GM12878 (cell line): ENCODE measurements at regions of chr2 and their contacts with region 1.

Region 1: DNA sequence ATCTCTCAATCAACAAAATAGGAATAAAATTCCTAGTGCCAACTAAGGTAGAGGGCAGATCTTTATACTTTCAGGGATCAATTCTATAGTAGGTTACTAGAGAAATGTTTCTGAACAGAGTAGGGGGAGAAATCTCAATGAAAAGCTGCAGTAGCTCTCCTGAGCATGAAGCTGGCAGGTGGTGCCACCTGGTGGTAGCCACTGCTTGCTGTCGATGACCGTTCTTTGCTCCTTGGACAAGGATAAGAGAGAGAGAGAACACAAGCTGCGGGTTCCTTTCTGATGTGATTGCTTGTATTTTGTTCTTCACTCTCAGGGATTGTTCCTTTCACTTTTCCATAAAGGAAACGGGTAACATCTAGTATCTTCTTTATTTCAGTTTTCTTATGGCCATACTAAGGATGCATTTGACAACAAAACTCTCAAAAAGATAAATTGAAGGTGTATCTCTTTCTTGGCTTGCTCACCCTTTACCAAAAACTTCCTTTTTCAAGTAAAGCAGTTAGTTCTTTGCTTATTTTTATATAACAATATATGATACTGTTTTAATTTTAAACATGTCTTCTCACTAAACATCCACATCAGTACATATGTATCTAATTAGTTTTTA is 18.6 kb upstream of the MRPL19 start:
- DNase-seq: no peak
- ATAC-seq: peak; percentile 96
- H3K4me3 ChIP-seq: no peak overlapping the region
- H3K27ac ChIP-seq: no peak overlapping the region
- H3K4me1 ChIP-seq: no peaks in the 10 kb centered on the region
- H3K27me3 ChIP-seq: peaks cover 0 to 2% of the 10 kb centered on the region in 2 experiments; a peak in 1 of 4 replicates
- CTCF ChIP-seq: peak; percentile 86 to 97 (median 91)
- EP300 ChIP-seq: no peak
- POLR2A ChIP-seq: no peak
- RAD21 ChIP-seq: peak; percentile 80

Region 2: DNA sequence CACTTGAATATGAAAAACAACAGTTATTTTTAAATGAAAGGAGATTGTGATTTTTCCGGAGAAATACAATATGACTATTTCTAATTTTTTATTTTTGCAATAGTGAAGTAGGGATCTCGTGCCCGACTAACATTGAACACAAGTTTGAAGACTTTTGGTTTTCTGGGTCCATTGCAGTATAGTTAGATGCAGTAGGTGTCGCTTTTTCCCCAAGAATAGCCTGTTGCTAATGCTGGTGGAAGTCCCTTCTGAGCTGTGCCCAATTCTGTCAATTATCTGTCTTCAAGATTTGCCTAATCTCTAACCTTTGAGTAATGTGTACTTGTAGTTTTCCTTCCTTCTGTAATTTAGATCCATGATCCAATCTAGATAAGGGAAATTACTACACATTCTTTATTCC is 937.4 kb before region 1 on chr2:
- CTCF ChIA-PET with region 1: interaction called, 15 read pairs
- POLR2A ChIA-PET with region 1: no interaction called
- RAD21 ChIA-PET with region 1: interaction called, 5 read pairs
- SMC1A ChIA-PET with region 1: no interaction called
- in situ Hi-C with region 1: no loop called
- intact Hi-C with region 1: loop called (anchors 10 kb)
- DNase-seq: peak; percentile 28
- ATAC-seq: peak; percentile 95
- H3K4me3 ChIP-seq: no peak overlapping the region
- H3K27ac ChIP-seq: no peak overlapping the region
- H3K4me1 ChIP-seq: no peaks in the 10 kb centered on the region
- H3K27me3 ChIP-seq: peaks cover 0 to 2% of the 10 kb centered on the region in 2 experiments; a peak in 1 of 4 replicates
- CTCF ChIP-seq: peak; percentile 71 to 92 (median 72)
- EP300 ChIP-seq: no peak
- POLR2A ChIP-seq: no peak
- RAD21 ChIP-seq: peak; percentile 94

Region 3: DNA sequence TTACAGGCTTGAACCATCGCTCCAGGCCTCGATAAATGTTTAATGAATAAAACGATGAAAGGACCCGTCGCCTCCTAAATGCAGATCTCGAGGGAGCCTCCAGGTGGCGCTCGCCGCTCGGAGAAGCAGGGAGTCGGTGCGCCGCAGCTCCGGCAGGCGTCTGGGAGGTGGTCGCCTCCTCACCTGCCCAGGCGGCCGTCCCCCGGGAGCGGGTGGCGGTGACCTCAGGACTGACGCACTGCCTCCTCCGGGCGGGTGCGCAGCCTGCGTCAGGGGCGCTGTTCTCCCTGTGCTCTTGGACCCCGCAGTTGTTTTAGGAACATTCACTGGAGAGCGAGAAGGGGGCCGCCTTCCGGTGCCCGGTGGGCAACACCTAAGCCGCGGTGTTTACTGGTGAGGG is 708.2 kb before region 1 on chr2:
- CTCF ChIA-PET with region 1: interaction called, 27 read pairs
- POLR2A ChIA-PET with region 1: no interaction called
- RAD21 ChIA-PET with region 1: interaction called, 9 read pairs
- SMC1A ChIA-PET with region 1: interaction called, 12 read pairs
- in situ Hi-C with region 1: no loop called
- intact Hi-C with region 1: loop called (anchors 2 kb)
- DNase-seq: no peak
- ATAC-seq: peak; percentile 77
- H3K4me3 ChIP-seq: no peak overlapping the region
- H3K27ac ChIP-seq: no peak overlapping the region
- H3K4me1 ChIP-seq: peaks cover 6% of the 10 kb centered on the region; the same call in 1 of the 2 replicates
- H3K27me3 ChIP-seq: no peaks in the 10 kb centered on the region
- CTCF ChIP-seq: peak; percentile 69 to 85 (median 84)
- EP300 ChIP-seq: no peak
- POLR2A ChIP-seq: no peak
- RAD21 ChIP-seq: peak; percentile 95

Region 4: DNA sequence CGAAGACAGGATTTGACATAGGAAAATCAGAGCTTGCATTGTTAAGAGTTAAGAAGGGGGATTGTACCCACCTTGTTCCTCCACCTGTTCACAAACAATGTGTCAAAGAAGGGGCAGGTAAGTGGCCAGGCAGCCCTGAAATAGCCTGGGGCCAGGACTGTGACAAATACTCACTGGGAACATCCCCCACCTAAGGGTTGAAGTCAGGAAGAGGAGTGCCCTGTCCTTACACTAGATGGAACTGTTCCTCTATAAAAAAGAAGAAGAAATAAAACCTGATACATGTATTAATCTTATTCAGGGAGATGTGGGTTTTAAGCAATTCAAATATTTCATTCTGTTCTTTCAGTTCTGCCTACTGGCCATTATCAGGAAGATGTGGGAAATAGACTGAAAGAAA is 470.6 kb before region 1 on chr2:
- CTCF ChIA-PET with region 1: interaction called, 16 read pairs
- POLR2A ChIA-PET with region 1: no interaction called
- RAD21 ChIA-PET with region 1: interaction called, 6 read pairs
- SMC1A ChIA-PET with region 1: interaction called, 7 read pairs
- in situ Hi-C with region 1: no loop called
- intact Hi-C with region 1: no loop called
- DNase-seq: no peak
- ATAC-seq: peak; percentile 45; the same call in 2 of the 3 replicates
- H3K4me3 ChIP-seq: no peak overlapping the region
- H3K27ac ChIP-seq: no peak overlapping the region
- H3K4me1 ChIP-seq: no peaks in the 10 kb centered on the region
- H3K27me3 ChIP-seq: no peaks in the 10 kb centered on the region
- CTCF ChIP-seq: peak in 2 of 3 experiments; percentile 15 to 25; a peak in 2 of 6 replicates
- EP300 ChIP-seq: no peak
- POLR2A ChIP-seq: no peak
- RAD21 ChIP-seq: peak; percentile 43; the same call in 1 of the 2 replicates

Region 5: DNA sequence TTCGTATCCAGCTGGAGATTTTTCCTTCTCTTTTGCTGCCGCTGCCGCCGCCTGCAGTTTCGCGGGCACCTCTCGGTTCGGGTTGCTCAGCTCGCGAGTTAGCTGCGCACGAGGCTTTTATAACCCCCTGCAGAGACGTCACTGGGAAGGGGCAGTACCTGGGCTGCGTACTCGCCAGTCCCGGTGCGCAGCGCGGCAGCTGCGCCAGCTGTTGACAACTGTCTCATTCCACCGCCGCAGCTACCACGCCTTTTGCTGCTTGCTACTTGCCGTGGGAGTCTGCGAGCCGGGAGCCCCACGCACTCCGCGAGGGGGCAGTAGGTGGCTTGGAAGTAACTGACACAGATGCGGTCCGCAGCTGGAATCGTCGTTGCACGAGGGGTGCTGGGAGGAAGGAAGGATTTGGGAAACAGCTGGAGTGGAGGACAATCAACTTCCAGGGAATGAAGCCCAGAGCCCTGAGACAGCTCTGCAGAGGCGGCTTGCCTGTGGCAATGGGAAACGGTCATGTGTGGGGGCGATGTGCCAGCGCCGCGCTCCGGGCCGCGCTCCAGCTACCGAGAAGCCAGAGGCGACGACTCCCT is 428.5 kb before region 1 on chr2 and contains the start of gene TACR1:
- CTCF ChIA-PET with region 1: interaction called, 11 read pairs
- POLR2A ChIA-PET with region 1: no interaction called
- RAD21 ChIA-PET with region 1: interaction called, 3 read pairs
- SMC1A ChIA-PET with region 1: no interaction called
- in situ Hi-C with region 1: no loop called
- intact Hi-C with region 1: loop called (anchors 5 kb)
- DNase-seq: peak; percentile 35
- ATAC-seq: peak; percentile 91
- H3K4me3 ChIP-seq: peak within 1 kb of the TSS; percentile 57
- H3K27ac ChIP-seq: no peak within 1 kb of the TSS
- H3K4me1 ChIP-seq: peaks cover 4% of the 10 kb centered on the region; the same call in 1 of the 2 replicates
- H3K27me3 ChIP-seq: peaks cover 5 to 11% of the 10 kb centered on the region in 2 experiments
- CTCF ChIP-seq: peak; percentile 56 to 69 (median 64)
- EP300 ChIP-seq: 0 out of 4 replicates have a peak, but pooled peaks of 1 of the 2 experiments have one; percentile 22
- POLR2A ChIP-seq: no peak
- RAD21 ChIP-seq: peak; percentile 73
- polyA plus RNA-seq, gene TACR1: 0.04 to 0.05 TPM